ENCODE measurements at regions of chr15 and their contacts with region 1.

Region 1: DNA sequence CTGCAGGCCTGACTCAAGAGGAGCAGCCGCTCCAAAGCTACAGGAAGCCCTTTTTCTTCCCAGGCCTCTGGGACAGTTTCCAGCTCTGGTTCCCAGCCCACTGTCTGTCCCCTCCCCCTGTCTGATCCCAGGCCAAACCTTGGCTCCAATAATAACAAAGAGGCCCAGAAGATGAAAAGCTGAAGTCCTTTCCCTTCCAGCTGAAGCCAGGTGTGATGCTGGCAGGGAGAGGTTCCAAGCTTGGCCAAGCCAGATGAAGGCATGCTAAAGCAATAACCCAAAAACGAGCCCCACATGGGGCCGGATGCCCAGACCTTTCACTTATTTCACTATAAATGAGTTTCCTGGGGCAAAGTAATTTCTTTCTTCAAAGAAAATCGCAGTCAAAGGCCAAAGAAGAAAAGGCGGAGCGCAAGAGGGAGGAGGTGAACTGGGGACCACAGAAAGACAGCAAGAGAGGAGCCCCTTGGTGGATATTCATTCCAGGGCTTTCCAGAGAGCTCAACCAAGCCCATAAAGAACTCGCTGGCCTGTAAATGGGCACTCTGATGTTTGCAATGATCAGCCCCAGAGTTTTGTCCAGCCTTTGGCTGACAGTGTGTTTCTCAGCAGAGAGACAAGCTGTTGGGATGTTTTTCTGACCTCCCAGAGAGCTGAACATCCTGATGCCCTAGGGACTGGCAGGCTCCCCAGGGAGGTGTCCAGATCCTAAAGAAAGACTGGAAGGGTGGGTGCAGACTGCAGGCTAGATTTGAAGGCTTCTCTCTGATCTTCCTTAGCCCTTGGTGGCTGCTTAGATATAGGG is 157.6 kb downstream of the UACA start:
- DNase-seq: no peak
- ATAC-seq: no peak
- H3K4me3 Mint-ChIP-seq: no peak overlapping the region
- H3K27ac Mint-ChIP-seq: no peak overlapping the region
- H3K4me1 Mint-ChIP-seq: no peaks in the 10 kb centered on the region
- H3K27me3 Mint-ChIP-seq: peaks cover 5% of the 10 kb centered on the region
- CTCF ChIP-seq: no peak

Region 2: DNA sequence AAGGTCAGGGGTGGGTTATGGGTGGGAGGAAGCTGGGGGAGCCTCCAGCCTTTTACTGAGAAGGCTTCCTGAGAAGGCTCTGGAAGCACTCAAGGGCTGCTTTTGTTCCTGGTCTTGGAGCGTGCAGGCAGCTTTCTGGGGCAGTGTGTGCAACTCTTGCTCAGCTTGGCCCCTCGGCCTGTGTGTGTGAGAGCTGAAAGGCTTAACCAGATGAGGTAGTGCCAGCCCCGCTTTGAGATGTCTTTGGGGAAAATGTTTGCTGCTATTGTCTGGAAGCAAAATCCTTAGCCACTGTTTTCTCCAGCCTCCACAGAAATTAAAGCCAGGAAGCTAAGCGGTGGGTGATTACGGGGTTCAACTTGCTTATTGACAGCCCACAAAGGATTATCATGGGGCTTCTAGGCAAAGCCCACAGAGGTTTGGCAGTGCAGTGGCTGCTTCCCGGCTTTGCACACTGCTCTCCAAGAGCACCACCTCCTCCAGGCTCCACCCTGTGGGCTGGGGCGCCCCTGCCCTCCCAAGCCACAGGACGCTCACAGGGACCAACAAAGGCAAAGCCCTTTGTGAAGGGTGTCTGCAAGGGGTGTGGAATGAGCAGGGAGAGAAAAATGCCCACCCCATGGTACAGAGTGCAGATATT is 386.4 kb before region 1 on chr15:
- CTCF ChIA-PET with region 1: no interaction called
- POLR2A ChIA-PET with region 1: interaction called, 10 read pairs
- intact Hi-C with region 1: no loop called
- DNase-seq: no peak
- ATAC-seq: no peak
- H3K4me3 Mint-ChIP-seq: no peak overlapping the region
- H3K27ac Mint-ChIP-seq: no peak overlapping the region
- H3K4me1 Mint-ChIP-seq: peaks cover 18% of the 10 kb centered on the region
- H3K27me3 Mint-ChIP-seq: no peaks in the 10 kb centered on the region
- CTCF ChIP-seq: no peak

Region 3: GRCh38 chr15:70589728-70590127 is 16.1 kb before region 1 on chr15:
- CTCF ChIA-PET with region 1: no interaction called
- POLR2A ChIA-PET with region 1: no interaction called
- intact Hi-C with region 1: no loop called
- DNase-seq: no peak
- ATAC-seq: no peak
- H3K4me3 Mint-ChIP-seq: no peak overlapping the region
- H3K27ac Mint-ChIP-seq: no peak overlapping the region
- H3K4me1 Mint-ChIP-seq: peaks cover 4% of the 10 kb centered on the region
- H3K27me3 Mint-ChIP-seq: peaks cover 38% of the 10 kb centered on the region
- CTCF ChIP-seq: no peak